ENCODE measurements at regions of chr17 and their contacts with region 1.

Region 1: GRCh38 chr17:72053449-72053848 is 67.4 kb upstream of the SOX9 start:
- DNase-seq: no peak
- ATAC-seq: no peak
- H3K4me3 ChIP-seq: no peak overlapping the region
- H3K27ac ChIP-seq: no peak overlapping the region
- H3K4me1 ChIP-seq: peaks cover 0 to 3% of the 10 kb centered on the region in 2 donors
- H3K27me3 ChIP-seq: no peaks in the 10 kb centered on the region
- CTCF ChIP-seq: no peak
- POLR2A ChIP-seq: no peak

Region 2: GRCh38 chr17:71821511-71821910 is 231.9 kb before region 1 on chr17:
- in situ Hi-C with region 1: no loop called
- intact Hi-C with region 1: no loop called
- DNase-seq: no peak
- ATAC-seq: no peak
- H3K4me3 ChIP-seq: no peak overlapping the region
- H3K27ac ChIP-seq: no peak overlapping the region
- H3K4me1 ChIP-seq: no peaks in the 10 kb centered on the region
- H3K27me3 ChIP-seq: no peaks in the 10 kb centered on the region
- CTCF ChIP-seq: no peak
- POLR2A ChIP-seq: no peak

Region 3: DNA sequence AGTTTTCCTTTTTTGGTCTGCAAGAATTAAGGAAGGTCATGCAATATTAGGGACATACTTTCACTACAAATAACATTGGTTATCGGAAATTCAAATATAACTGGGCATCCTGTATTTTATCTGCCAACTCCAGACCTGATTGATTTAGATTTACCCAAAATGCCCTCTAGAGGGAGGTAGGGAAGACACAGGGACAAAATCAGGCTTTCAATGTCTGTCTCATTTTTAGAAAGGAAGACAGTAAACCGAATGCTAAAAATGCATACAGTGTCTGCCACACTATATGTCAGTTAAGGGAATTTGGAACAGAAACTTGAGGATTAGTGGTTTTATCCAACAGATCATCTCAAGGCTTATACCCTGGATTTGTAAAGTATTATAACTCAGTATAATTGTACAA is 94.3 kb before region 1 on chr17:
- in situ Hi-C with region 1: loop called in 1 of 4 experiments (anchors 25 kb)
- intact Hi-C with region 1: no loop called
- DNase-seq: no peak
- ATAC-seq: no peak
- H3K4me3 ChIP-seq: no peak overlapping the region
- H3K27ac ChIP-seq: no peak overlapping the region
- H3K4me1 ChIP-seq: no peaks in the 10 kb centered on the region
- H3K27me3 ChIP-seq: no peaks in the 10 kb centered on the region
- CTCF ChIP-seq: peak in 3 of 5 experiments; percentile 25 to 47 (median 26)
- POLR2A ChIP-seq: no peak

Region 4: GRCh38 chr17:72030067-72030899 is 23.2 kb before region 1 on chr17:
- in situ Hi-C with region 1: no loop called
- intact Hi-C with region 1: loop called (anchors 2 kb)
- DNase-seq: peak in 1 of 2 donors; percentile 15
- ATAC-seq: peak; percentile 47 to 66
- H3K4me3 ChIP-seq: peak overlapping the region; percentile 36 to 61 (median 50)
- H3K27ac ChIP-seq: no peak overlapping the region
- H3K4me1 ChIP-seq: no peaks in the 10 kb centered on the region
- H3K27me3 ChIP-seq: peaks cover 0 to 14% (median 0%) of the 10 kb centered on the region in 3 donors
- CTCF ChIP-seq: peak in 3 of 5 experiments; percentile 22 to 45 (median 31)
- POLR2A ChIP-seq: no peak

Region 5: GRCh38 chr17:72104164-72104862 is 50.9 kb after region 1 on chr17:
- in situ Hi-C with region 1: no loop called
- intact Hi-C with region 1: no loop called
- DNase-seq: no peak
- ATAC-seq: no peak
- H3K4me3 ChIP-seq: no peak overlapping the region
- H3K27ac ChIP-seq: no peak overlapping the region
- H3K4me1 ChIP-seq: no peaks in the 10 kb centered on the region
- H3K27me3 ChIP-seq: no peaks in the 10 kb centered on the region
- CTCF ChIP-seq: no peak
- POLR2A ChIP-seq: no peak